Dorsolateral prefrontal cortex (tissue), 120 donors: ENCODE measurements at regions of chr19 and their contacts with region 1.

Region 1: DNA sequence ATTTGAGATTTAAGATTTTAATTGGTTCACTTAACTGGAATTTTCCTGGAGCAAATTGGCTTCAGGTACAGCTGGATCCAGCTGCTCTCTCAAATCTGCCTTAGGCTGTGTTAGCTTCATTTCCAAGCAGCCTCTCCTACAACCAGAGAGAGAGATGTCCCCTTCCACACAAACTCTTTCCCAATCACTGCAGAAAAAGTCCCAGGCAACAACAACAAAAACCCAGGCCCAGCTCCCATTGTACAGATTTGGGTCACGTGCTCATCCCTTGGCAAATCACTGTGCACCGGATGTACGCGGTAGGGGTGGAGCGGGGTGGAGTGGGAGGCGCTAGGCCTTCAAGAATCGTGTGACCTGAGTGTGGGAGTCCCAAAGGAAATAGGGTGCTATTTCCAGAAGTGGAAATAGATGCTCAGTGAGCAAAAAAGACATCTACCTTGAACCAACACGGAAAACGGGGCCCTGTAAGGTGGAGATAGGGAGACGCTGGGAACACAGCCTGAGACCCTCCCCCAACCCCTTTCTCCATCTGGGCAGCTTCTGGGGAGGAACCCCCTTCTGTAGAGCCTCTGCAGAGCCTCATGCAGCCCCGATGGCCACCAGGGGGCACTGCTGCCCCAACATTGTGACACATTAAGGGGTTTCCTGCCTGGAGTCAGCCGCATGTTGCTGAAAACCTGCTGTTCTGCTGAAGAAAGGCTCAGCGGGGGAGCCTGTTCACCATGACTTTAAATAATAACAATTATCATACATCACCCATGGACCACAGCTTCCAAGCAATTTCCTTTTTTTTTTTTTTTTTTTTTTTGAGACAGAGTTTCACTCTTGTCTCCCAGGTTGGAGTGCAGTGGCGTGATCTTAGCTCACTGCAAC is 25.4 kb downstream of the HPN start:
- DNase-seq: peak; percentile 87 to 96 (median 92)
- H3K4me3 ChIP-seq: no peak overlapping the region
- H3K27ac ChIP-seq: peak overlapping the region in 49 of 59 donors; percentile 0 to 86 (median 66)
- H3K27me3 ChIP-seq: no peaks in the 10 kb centered on the region
- CTCF ChIP-seq: peak; percentile 86 to 98 (median 94)

Region 2: GRCh38 chr19:35044317-35045117 is 22.4 kb before region 1 on chr19:
- intact Hi-C with region 1: loop called in 1 of 2 experiments (anchors 2 kb)
- DNase-seq: peak in 9 of 10 donors; percentile 73 to 84 (median 79)
- H3K4me3 ChIP-seq: no peak overlapping the region
- H3K27ac ChIP-seq: peak overlapping the region in 53 of 59 donors; percentile 7 to 99 (median 74)
- H3K27me3 ChIP-seq: no peaks in the 10 kb centered on the region
- CTCF ChIP-seq: peak; percentile 92 to 100 (median 98)

Region 3: DNA sequence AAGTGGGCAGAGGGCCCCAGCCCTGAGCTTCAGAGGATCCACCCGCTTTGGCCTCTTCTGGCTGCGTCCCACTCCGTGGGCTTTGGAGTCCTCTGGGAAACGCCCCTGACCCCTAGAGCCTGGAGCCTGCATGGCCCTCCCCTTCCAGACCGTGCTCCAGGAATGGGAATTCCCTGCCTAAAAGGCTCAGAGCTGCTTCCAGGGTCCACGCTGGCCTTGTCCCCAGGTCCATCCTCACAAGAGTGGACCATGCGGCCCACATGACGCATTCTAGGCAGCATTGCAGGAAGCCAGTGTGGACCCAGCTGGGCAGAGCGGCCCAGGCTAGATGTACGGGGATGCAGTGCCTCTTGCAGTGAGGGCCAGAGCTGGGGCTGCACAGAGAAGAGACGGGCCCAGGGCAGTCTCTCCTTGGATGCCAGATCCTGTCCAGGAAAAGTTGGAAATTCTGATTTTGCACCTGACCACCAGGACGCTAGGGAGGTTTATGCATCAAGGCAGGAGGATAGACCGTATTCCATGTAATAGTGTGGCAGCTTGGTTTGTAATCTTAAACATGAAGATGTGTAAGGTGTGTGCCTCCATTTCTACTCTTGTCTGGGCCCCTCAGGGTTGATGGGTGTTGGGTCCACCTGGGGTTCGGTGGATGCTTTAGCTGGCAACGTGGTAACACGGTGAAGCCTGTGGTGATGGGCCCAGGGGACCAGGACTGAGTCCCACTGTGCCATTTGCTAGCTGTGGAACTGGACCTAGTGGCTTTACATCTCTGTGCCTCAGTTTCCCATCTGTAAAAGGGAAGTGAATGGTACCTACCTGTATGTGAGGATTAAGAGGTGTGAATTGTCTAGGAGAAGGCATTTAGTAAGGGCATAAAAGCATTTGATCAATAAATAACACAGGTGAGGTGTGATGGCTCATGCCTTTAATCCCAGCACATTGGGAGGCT is 33.9 kb after region 1 on chr19:
- intact Hi-C with region 1: loop called in 1 of 2 experiments (anchors 5 kb)
- DNase-seq: no peak
- H3K4me3 ChIP-seq: no peak overlapping the region
- H3K27ac ChIP-seq: peak overlapping the region in 44 of 59 donors; percentile 1 to 98 (median 53)
- H3K27me3 ChIP-seq: no peaks in the 10 kb centered on the region
- CTCF ChIP-seq: no peak

Region 4: GRCh38 chr19:35135389-35135909 is 68.5 kb after region 1 on chr19:
- intact Hi-C with region 1: loop called (anchors 2 kb)
- DNase-seq: peak; percentile 80 to 87 (median 84)
- H3K4me3 ChIP-seq: peak overlapping the region in 58 of 59 donors; percentile 20 to 62 (median 49)
- H3K27ac ChIP-seq: peak overlapping the region in 58 of 59 donors; percentile 78 to 99 (median 94)
- H3K27me3 ChIP-seq: peaks cover 0 to 3% (median 0%) of the 10 kb centered on the region in 45 donors
- CTCF ChIP-seq: peak; percentile 76 to 99 (median 95)

Region 5: DNA sequence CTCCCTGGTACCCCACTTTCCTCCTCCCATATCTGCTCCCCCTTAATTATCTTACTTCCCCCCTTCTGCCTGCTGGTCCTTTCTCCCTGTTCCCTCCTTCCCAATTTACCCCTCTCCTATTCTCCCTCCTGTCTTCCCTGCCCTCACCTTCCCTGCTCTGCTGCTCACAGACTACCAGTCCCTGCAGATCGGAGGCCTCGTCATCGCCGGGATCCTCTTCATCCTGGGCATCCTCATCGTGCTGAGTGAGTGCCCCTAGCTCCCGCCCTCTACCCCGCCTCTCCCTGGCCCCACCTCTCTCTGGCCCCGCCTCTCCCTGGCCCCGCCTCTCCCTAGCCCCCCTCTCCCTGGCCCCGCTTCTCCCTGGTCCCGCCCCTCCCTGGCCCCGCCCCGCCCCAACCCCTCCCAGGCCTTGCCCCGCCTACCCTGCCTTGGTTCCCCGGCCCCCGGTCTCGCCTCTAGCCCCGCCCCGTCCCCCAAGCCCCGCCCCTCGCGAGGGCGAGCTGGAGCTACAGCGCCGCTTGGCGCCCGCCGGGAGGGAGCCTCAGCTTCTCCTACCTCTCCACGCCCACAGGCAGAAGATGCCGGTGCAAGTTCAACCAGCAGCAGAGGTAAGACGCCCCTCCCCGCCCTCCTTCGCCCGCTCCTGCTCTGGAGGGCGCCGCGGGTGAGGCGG is 74.2 kb after region 1 on chr19:
- intact Hi-C with region 1: loop called in 1 of 2 experiments (anchors 2 kb)
- DNase-seq: peak; percentile 81 to 97 (median 94)
- H3K4me3 ChIP-seq: peak overlapping the region; percentile 16 to 80 (median 61)
- H3K27ac ChIP-seq: peak overlapping the region in 55 of 59 donors; percentile 13 to 99 (median 89)
- H3K27me3 ChIP-seq: peaks cover 0 to 3% (median 0%) of the 10 kb centered on the region in 45 donors
- CTCF ChIP-seq: peak in 53 of 56 donors; percentile 15 to 72 (median 48)

Region 6: GRCh38 chr19:35168207-35168606 is 101.3 kb after region 1 on chr19:
- intact Hi-C with region 1: no loop called
- DNase-seq: no peak
- H3K4me3 ChIP-seq: no peak overlapping the region
- H3K27ac ChIP-seq: no peak overlapping the region
- H3K27me3 ChIP-seq: no peaks in the 10 kb centered on the region
- CTCF ChIP-seq: no peak